ENCODE measurements at regions of chr14 and their contacts with region 1.

Region 1: GRCh38 chr14:105944632-105945610 is 418.5 kb downstream of the TMEM121 start:
- DNase-seq: peak; percentile 38 to 83 (median 56)
- ATAC-seq: peak; percentile 85
- H3K4me3 ChIP-seq: no peak overlapping the region
- H3K4me3 Mint-ChIP-seq: peak overlapping the region in 4 of 10 donors; percentile 42 to 65 (median 52)
- H3K27ac ChIP-seq: no peak overlapping the region
- H3K27ac Mint-ChIP-seq: no peak overlapping the region
- H3K4me1 ChIP-seq: no peaks in the 10 kb centered on the region
- H3K4me1 Mint-ChIP-seq: peaks cover 11 to 20% (median 15%) of the 10 kb centered on the region in 7 donors
- H3K27me3 ChIP-seq: no peaks in the 10 kb centered on the region
- H3K27me3 Mint-ChIP-seq: peaks cover 0 to 4% (median 0%) of the 10 kb centered on the region in 5 donors

Region 2: GRCh38 chr14:105682940-105683570 is 261.9 kb before region 1 on chr14:
- CTCF ChIA-PET with region 1: no interaction called
- POLR2A ChIA-PET with region 1: no interaction called
- intact Hi-C with region 1: loop called in 1 of 2 experiments (anchors 10 kb)
- DNase-seq: no peak
- ATAC-seq: no peak
- H3K4me3 ChIP-seq: no peak overlapping the region
- H3K4me3 Mint-ChIP-seq: peak overlapping the region in 1 of 10 donors; percentile 34
- H3K27ac ChIP-seq: no peak overlapping the region
- H3K27ac Mint-ChIP-seq: peak overlapping the region in 3 of 9 donors; percentile 22 to 79 (median 63)
- H3K4me1 ChIP-seq: no peaks in the 10 kb centered on the region
- H3K4me1 Mint-ChIP-seq: peaks cover 0 to 7% (median 0%) of the 10 kb centered on the region in 7 donors
- H3K27me3 ChIP-seq: no peaks in the 10 kb centered on the region
- H3K27me3 Mint-ChIP-seq: peaks cover 0 to 3% (median 0%) of the 10 kb centered on the region in 5 donors

Region 3: GRCh38 chr14:106044949-106045600 is 100.2 kb after region 1 on chr14:
- CTCF ChIA-PET with region 1: no interaction called
- POLR2A ChIA-PET with region 1: no interaction called
- intact Hi-C with region 1: loop called in 1 of 2 experiments (anchors 1 kb)
- DNase-seq: peak; percentile 56 to 78 (median 74)
- ATAC-seq: peak; percentile 98
- H3K4me3 ChIP-seq: no peak overlapping the region
- H3K4me3 Mint-ChIP-seq: no peak overlapping the region
- H3K27ac ChIP-seq: no peak overlapping the region
- H3K27ac Mint-ChIP-seq: peak overlapping the region in 1 of 9 donors; percentile 76
- H3K4me1 ChIP-seq: no peaks in the 10 kb centered on the region
- H3K4me1 Mint-ChIP-seq: peaks cover 0 to 6% (median 0%) of the 10 kb centered on the region in 7 donors
- H3K27me3 ChIP-seq: no peaks in the 10 kb centered on the region
- H3K27me3 Mint-ChIP-seq: peaks cover 0 to 8% (median 0%) of the 10 kb centered on the region in 5 donors

Measured in naive thymus-derived CD4-positive, alpha-beta T cell (primary cell).